ENCODE measurements at regions of chr12 and their contacts with region 1.

Region 1: GRCh38 chr12:50924439-50925341 is 27.7 kb upstream of the HIGD1C start:
- DNase-seq: peak; percentile 65 to 93 (median 84)
- H3K4me3 ChIP-seq: peak overlapping the region; percentile 44 to 89 (median 74)
- H3K27ac ChIP-seq: peak overlapping the region; percentile 64 to 99 (median 95)
- H3K27me3 ChIP-seq: no peaks in the 10 kb centered on the region
- CTCF ChIP-seq: peak in 10 of 56 donors; percentile 2 to 21 (median 6)

Region 2: GRCh38 chr12:49673446-49674317 is 1251.0 kb before region 1 on chr12:
- intact Hi-C with region 1: loop called in 1 of 2 experiments (anchors 10 kb)
- DNase-seq: peak; percentile 89 to 98 (median 95)
- H3K4me3 ChIP-seq: peak overlapping the region in 48 of 59 donors; percentile 1 to 48 (median 26)
- H3K27ac ChIP-seq: peak overlapping the region; percentile 30 to 99 (median 97)
- H3K27me3 ChIP-seq: no peaks in the 10 kb centered on the region
- CTCF ChIP-seq: peak in 41 of 56 donors; percentile 7 to 64 (median 44)

Region 3: DNA sequence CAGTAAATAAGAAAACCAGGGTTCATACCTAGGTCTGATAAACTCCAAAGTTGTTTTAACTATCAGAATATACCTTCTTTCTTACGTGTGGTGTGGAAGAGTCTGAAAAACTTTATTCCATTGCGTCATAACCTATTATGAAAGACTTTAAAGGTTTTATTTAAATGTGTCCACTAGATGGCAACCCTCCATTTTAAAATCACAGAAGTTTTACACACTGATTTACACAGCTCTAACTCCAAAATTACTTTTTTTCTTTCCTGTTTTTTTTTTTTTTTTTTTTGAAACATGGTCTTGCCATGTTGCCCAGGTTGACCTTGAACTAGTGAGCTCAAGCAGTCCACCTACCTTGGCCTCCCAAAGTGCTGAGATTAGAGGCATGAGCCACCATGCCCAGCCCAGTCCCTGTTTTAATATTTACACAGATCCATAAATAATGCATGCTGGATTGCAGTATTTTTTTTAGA is 99.3 kb before region 1 on chr12:
- intact Hi-C with region 1: loop called (anchors 5 kb)
- DNase-seq: no peak
- H3K4me3 ChIP-seq: peak overlapping the region in 3 of 59 donors; percentile 6 to 20 (median 10)
- H3K27ac ChIP-seq: peak overlapping the region in 29 of 59 donors; percentile 1 to 65 (median 32)
- H3K27me3 ChIP-seq: no peaks in the 10 kb centered on the region
- CTCF ChIP-seq: peak; percentile 52 to 84 (median 70)

Region 4: GRCh38 chr12:50934981-50935807 is 10.5 kb after region 1 on chr12:
- intact Hi-C with region 1: no loop called
- DNase-seq: no peak
- H3K4me3 ChIP-seq: peak overlapping the region in 6 of 59 donors; percentile 0 to 20 (median 10)
- H3K27ac ChIP-seq: peak overlapping the region in 46 of 59 donors; percentile 3 to 77 (median 48)
- H3K27me3 ChIP-seq: no peaks in the 10 kb centered on the region
- CTCF ChIP-seq: no peak

Region 5: DNA sequence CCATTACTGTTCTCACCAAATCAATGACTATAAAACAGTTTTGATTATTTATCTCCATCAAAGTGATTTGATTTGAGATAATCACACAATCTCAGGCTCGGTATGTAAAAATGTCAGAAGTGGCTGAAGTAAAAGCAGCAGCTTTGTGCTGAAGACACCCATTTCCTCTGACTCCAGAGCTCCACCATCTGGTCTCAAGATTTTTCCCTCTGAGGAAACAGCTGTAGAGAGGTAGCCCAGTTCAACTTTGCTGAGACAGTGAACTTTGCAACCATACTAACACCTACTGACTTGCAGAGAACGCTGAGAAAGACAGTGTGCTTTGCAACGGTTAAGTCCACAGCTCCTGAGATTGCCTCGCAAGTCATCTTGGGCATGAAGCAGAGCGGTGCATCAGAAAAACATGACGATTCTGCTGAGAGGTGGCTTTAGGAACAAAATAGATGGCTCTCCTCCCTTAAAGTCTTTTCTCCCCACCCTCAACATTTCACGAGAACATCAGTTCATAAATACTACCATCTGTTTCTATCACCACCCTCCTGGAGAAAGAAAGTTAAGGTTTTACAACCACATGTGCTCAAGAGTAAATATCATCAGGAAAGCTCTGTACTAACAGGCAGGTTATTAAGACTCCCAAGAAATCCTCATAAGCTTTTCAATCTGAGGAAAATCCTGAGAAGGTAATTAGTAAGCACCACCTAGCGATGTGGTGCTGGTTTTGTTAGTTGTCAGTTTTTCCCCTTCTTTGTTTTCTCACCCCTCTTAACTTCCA is 62.5 kb after region 1 on chr12:
- intact Hi-C with region 1: loop called in 1 of 2 experiments (anchors 5 kb)
- DNase-seq: peak in 2 of 10 donors; percentile 23 to 60
- H3K4me3 ChIP-seq: peak overlapping the region in 1 of 59 donors; percentile 7
- H3K27ac ChIP-seq: peak overlapping the region in 49 of 59 donors; percentile 2 to 92 (median 61)
- H3K27me3 ChIP-seq: no peaks in the 10 kb centered on the region
- CTCF ChIP-seq: peak in 55 of 56 donors; percentile 39 to 82 (median 65)

Region 6: DNA sequence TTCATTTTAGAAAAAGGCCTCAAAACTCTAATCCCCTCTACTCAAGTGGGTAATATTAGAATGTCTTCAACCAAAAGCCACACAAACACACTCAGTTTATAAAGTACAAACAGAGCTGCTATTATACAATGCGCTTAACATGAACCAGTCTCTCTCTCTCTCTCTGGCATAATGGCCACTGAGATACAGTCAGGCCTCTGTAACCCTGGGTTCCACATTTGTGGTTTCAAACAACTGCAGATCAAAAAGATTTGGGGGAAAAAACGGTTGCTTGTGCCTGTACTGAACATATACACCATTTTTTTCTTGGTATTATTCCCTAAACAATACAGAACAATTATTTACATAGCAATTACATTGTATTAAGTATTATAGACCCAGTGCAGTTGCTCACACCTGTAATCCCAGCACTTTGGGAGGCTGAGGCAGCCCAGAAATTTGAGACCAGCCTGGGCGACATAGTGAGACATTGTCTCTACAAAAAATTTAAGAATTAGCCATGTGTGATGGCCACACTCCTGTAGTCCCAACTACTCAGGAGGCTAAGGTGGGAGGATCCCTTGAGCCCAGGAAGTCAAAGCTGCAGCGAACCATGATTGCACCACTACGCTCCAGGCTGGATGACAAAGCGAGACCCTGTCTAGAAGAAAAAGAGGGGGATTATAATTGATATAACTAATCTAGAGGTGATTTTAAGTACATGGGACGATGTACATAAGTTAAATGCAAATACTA is 95.9 kb after region 1 on chr12:
- intact Hi-C with region 1: loop called (anchors 2 to 10 kb)
- DNase-seq: no peak
- H3K4me3 ChIP-seq: peak overlapping the region in 13 of 59 donors; percentile 2 to 28 (median 18)
- H3K27ac ChIP-seq: peak overlapping the region; percentile 21 to 100 (median 99)
- H3K27me3 ChIP-seq: no peaks in the 10 kb centered on the region
- CTCF ChIP-seq: peak in 2 of 56 donors; percentile 20 to 43

Measured in dorsolateral prefrontal cortex (tissue), 120 donors.